ENCODE measurements at regions of chr10 and their contacts with region 1.

Region 1: GRCh38 chr10:104353325-104354048 is at the start of gene CFAP58:
- DNase-seq: peak; percentile 81
- CTCF ChIP-seq: peak; percentile 73

Region 2: GRCh38 chr10:104274762-104275721 is 78.4 kb before region 1 on chr10:
- CTCF ChIA-PET with region 1: interaction called, 33 read pairs
- POLR2A ChIA-PET with region 1: no interaction called
- DNase-seq: peak; percentile 73
- CTCF ChIP-seq: peak; percentile 76

Region 3: DNA sequence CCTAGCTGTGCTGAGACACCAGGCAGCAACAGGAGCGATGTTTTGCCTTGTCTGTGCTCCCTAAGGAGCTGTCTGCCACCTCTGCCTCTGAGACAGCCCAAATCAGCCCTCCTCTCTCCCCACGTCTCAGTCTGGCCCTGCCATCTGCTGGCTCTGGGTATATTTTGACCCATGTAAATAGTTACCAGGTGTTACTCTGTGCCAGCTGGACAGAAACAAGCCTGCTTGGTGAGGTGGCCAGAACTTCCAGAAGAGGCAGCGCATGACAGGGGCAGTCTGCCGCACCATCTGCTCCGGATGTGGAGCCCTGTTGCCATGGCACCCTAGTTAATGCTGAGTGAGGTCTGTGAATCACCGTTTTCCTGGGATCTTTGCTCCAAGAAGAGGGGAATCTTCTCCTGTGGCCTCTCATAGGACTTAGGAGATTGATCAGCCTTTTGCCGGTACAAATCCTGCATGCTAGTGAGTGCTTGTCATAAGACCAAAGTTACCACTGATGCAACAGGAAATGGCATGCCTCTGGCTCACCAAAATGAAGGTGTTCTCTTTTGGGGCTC is 52.7 kb before region 1 on chr10:
- CTCF ChIA-PET with region 1: interaction called, 240 read pairs
- POLR2A ChIA-PET with region 1: no interaction called
- DNase-seq: no peak
- CTCF ChIP-seq: no peak

Region 4: DNA sequence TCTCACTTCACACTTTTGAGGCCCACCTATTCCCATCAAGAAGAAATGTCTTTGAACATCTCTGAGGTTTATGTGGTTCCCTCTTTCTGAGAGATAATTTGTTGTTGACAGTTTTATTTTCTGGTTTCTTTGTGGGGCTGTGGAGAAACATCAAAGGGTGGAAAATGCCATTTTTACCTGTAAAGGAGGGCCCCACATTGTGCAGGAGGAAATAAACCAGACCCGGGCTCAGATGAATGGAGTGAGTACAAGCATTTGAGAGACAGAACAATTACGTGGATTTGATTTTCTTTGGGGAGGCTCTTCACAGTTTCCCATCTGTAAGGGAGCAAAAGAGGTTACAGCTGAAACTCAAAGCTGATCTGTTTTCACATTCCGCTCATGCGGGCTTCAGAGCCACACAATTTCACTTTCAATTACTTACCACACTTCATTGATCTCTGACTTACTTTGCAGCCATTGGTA is 45.0 kb before region 1 on chr10:
- CTCF ChIA-PET with region 1: interaction called, 180 read pairs
- POLR2A ChIA-PET with region 1: no interaction called
- DNase-seq: peak; percentile 58
- CTCF ChIP-seq: no peak

Region 5: DNA sequence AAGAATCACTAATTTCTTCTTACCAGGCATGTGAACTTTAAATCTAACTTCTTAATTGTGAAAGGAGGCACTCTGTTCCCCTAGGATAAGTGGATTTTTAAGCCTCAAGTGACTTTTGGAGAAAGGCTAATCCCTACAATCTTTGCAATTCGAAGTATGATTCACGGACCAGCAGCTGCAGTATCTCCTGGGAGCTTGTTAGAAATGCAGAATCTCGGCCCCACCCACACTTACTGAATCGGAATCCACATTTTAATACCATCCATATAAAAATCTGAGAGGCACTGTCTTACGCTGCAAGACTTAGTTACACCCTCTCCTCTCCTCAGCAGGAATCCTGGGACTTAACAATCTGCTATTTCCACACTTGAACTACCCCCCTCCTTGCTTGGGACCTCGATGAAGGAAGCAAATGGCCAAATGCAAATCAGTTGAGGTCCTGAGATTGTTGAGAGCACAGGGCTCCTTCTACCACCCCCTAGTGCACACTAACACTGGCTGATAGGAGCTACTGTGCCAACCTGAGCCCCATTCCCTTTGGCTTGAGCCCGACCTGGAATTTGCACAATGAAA is 36.2 kb before region 1 on chr10:
- CTCF ChIA-PET with region 1: interaction called, 13 read pairs
- POLR2A ChIA-PET with region 1: no interaction called
- DNase-seq: no peak
- CTCF ChIP-seq: no peak

Region 6: GRCh38 chr10:104337974-104338735 is 15.3 kb before region 1 on chr10 and contains the start of gene ITPRIP:
- CTCF ChIA-PET with region 1: interaction called, 73 read pairs
- POLR2A ChIA-PET with region 1: interaction called, 3 read pairs
- DNase-seq: peak; percentile 79
- CTCF ChIP-seq: no peak

Region 7: GRCh38 chr10:104367904-104368303 is 14.4 kb after region 1 on chr10:
- CTCF ChIA-PET with region 1: interaction called, 13 read pairs
- POLR2A ChIA-PET with region 1: no interaction called
- DNase-seq: no peak
- CTCF ChIP-seq: no peak

Region 8: DNA sequence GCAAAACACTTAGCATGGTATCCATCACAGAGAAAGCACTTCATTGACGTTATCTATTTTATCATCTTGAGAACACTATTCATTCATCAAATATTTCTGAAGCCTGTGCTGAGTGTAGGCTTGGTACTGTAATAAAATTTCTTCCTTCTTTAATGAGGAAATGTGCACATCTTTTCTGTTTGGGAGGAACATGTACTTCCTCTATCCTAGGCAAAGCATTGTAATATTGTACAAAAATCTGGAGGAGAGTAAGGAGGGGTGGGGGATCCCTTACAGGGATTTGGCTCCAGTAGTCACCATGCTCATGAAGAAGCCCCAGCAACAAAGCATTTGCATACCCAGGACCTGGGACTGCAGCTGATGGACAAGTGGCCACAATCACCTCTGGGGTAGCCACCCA is 247.7 kb after region 1 on chr10:
- CTCF ChIA-PET with region 1: no interaction called
- POLR2A ChIA-PET with region 1: no interaction called
- DNase-seq: no peak
- CTCF ChIP-seq: no peak

Measured in GM10248 (cell line).